ENCODE measurements at regions of chr4 and their contacts with region 1.

Region 1: DNA sequence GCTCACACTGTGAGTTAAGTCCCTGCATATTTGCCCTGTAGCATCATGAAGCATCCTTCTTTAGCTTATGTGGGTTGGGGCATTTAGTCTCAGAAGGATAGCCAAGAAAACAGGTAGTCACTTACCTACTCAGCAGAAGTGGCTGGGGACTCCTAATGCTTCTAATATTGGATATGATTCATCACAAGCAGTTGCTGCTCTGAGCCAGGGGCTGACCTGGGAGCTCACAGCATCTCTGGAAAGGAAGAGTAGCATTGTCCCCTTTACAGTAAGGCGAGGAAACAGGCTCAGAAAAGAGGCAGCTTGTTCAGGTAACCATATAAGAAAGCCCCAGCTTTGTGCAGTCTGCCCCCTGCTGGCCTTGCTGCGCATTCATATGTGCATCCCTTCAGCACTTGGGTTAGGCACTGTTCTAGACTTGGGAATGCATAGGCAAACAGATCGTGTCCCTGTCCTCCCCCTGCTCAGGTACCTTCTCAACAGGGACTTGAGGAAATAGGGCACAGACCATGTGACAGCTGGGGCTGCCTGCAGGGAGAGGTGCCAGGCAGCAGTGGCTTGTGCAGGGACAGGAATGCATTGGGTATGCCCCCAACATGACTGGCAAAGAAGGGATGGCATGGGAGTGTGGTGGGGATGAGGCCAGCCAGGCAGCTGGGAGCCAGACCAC is 35.7 kb upstream of the TBC1D14 start:
- DNase-seq: no peak
- H3K4me3 ChIP-seq: no peak overlapping the region
- CTCF ChIP-seq: peak; percentile 83

Region 2: GRCh38 chr4:5881340-5881739 is 992.6 kb before region 1 on chr4:
- CTCF ChIA-PET with region 1: no interaction called
- POLR2A ChIA-PET with region 1: no interaction called
- DNase-seq: no peak
- H3K4me3 ChIP-seq: no peak overlapping the region
- CTCF ChIP-seq: no peak

Region 3: GRCh38 chr4:6727081-6727942 is 146.6 kb before region 1 on chr4:
- CTCF ChIA-PET with region 1: interaction called, 308 read pairs
- POLR2A ChIA-PET with region 1: no interaction called
- DNase-seq: no peak
- H3K4me3 ChIP-seq: no peak overlapping the region; the same call in 1 of the 2 replicates
- CTCF ChIP-seq: no peak

Region 4: GRCh38 chr4:6768539-6768905 is 105.4 kb before region 1 on chr4:
- CTCF ChIA-PET with region 1: interaction called, 18 read pairs
- POLR2A ChIA-PET with region 1: no interaction called
- DNase-seq: no peak
- H3K4me3 ChIP-seq: no peak overlapping the region
- CTCF ChIP-seq: no peak

Region 5: DNA sequence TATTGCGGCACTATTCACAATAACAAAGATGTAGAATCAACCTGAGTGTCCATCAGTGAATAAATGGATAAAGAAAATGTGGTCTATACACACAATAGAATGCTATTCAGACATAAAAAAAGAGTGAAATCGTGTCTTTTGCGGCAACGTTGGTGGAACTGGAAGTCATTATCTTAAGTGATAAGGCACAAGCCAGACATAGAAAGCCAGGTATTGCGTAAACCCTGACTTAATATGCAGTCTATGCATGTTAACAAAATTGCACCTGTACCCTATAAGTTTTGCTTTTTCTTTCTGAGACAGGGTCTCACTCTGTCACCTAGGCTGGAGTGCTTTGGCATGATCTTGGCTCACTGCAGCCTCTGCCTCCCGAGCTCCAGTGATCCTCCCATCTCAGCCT is 62.8 kb before region 1 on chr4:
- CTCF ChIA-PET with region 1: interaction called, 11 read pairs
- POLR2A ChIA-PET with region 1: no interaction called
- DNase-seq: no peak
- H3K4me3 ChIP-seq: no peak overlapping the region
- CTCF ChIP-seq: no peak

Region 6: DNA sequence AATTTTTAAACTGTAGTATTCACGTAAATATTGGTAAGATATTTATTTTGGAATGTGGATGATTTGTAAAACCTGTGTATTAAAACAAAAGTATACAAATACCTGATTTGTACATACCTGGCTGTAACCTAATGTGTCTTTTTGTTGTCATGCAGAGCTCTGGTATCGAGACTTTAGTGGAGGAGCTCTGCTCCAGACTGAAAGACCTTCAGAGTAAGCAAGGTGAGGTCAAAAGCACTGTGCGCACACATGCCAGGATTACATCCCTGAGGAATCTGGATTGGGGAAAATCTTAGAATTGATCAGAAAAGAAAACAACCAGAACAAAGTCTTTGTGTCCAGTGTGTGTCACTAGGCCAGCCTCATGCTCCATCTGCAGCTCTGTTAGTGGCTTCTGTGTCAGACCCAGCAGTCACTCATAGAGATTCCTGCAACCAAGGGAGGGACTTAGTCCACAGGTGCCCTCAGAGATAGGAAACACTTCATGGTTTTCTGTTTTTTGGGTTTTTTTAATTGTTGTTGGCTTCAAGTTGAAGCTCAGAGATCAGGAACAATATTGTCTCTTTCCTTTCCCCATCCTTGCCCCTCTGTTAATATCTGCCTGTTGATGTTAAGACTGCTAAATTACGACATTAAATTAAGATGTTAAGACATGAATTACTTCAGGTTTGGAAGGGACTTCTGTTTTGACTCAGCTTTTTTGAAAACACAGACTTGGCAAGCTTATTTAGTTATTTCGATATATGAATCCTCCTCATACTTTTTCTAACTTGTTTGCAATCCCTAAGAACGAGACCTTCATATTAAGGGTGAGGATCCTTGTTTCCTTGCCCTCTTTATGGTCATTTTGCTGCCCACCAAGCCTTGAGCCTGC is 16.7 kb before region 1 on chr4:
- CTCF ChIA-PET with region 1: interaction called, 131 read pairs
- POLR2A ChIA-PET with region 1: no interaction called
- DNase-seq: no peak
- H3K4me3 ChIP-seq: no peak overlapping the region
- CTCF ChIP-seq: no peak

Region 7: GRCh38 chr4:6942238-6942800 is 68.4 kb after region 1 on chr4:
- CTCF ChIA-PET with region 1: no interaction called
- POLR2A ChIA-PET with region 1: no interaction called
- DNase-seq: peak; percentile 95
- H3K4me3 ChIP-seq: peak overlapping the region; percentile 29
- CTCF ChIP-seq: no peak

Region 8: DNA sequence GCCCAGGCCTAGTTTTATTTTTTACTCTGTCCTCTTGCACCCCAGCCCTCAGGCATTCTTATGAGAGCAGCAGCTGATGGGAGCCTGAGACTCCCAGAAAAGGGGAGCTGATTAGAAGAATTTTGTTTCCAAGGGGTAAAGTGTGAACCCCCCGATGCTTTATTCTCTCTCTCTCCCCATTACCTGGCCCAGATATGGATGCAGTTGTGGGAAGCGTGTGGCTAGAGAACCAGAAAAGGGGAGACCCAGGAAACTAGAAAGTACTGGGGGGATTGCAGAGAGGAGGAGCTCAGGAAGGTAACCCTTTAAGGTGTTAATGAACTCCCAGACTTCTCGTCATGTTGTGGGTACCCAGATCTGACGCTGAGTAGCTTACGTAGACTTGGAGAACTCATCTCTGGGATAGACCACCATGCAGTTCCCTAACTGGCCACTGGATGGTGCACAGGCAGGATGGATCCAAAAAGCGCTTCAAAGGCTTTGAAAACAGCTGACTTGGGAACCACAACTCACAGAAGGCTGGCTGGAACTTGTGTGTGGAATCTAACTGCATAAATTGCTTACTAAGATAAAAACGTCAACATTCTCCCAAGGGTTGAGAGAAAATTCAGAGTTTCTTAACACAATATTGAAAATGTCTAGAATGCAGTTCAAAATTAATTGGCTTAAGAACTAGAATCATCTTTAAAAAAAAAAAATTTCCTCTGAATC is 100.4 kb after region 1 on chr4:
- CTCF ChIA-PET with region 1: interaction called, 14 read pairs
- POLR2A ChIA-PET with region 1: no interaction called
- DNase-seq: no peak
- H3K4me3 ChIP-seq: no peak overlapping the region
- CTCF ChIP-seq: peak; percentile 92